MCF 10A (cell line): ENCODE measurements at regions of chr6 and their contacts with region 1.

Region 1: DNA sequence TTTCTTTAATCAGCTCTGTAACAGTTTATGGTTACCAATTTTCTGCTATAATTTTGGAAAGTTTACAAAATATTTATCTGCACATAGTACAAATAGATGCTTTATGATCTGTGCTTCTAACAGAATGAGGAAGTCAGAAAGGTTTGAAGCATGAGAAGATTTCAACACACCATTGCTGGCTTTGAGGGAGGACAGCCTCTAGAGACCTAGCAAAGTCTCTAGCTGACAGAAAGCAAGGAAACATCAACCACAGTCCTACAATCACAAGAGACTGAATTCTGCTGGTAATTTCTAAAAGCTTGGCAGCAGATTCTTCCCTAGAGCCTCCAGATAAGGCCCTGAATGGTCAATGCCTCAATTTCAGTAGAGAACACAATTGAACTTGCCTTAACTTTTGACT is 750.8 kb upstream of the SLC35B3 start:
- DNase-seq: no peak
- H3K4me3 Mint-ChIP-seq: no peak overlapping the region
- H3K27ac Mint-ChIP-seq: no peak overlapping the region
- H3K4me1 Mint-ChIP-seq: no peaks in the 10 kb centered on the region
- H3K27me3 Mint-ChIP-seq: no peaks in the 10 kb centered on the region
- CTCF ChIP-seq: no peak

Region 2: DNA sequence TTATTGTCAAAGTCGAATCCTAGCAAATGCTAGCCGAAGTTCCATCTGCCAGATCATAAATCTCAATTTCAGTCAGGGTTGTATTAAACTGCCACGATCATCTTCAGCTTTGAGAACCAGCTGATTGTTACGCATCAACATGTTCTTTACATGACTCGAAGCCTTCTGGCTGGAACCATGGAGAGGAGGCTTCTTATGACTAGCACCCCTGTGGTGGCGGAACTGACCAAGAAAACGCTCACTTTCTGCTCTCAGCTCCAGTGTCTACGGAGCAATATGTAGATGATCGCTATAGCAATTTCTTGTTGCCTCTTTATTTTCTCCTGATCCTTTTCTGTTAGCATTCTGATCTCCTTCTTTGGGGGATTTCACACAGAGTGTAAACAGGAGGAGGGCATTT is 271.4 kb before region 1 on chr6:
- CTCF ChIA-PET with region 1: no interaction called
- POLR2A ChIA-PET with region 1: no interaction called
- intact Hi-C with region 1: no loop called
- DNase-seq: no peak
- H3K4me3 Mint-ChIP-seq: no peak overlapping the region
- H3K27ac Mint-ChIP-seq: no peak overlapping the region
- H3K4me1 Mint-ChIP-seq: no peaks in the 10 kb centered on the region
- H3K27me3 Mint-ChIP-seq: no peaks in the 10 kb centered on the region
- CTCF ChIP-seq: no peak

Region 3: GRCh38 chr6:9161731-9162130 is 24.4 kb before region 1 on chr6:
- CTCF ChIA-PET with region 1: no interaction called
- POLR2A ChIA-PET with region 1: interaction called, 4 read pairs
- intact Hi-C with region 1: loop called (anchors 2 kb)
- DNase-seq: no peak
- H3K4me3 Mint-ChIP-seq: no peak overlapping the region
- H3K27ac Mint-ChIP-seq: no peak overlapping the region
- H3K4me1 Mint-ChIP-seq: no peaks in the 10 kb centered on the region
- H3K27me3 Mint-ChIP-seq: no peaks in the 10 kb centered on the region
- CTCF ChIP-seq: no peak